Dendritic cell treated with granulocyte-macrophage colony-stimulating factor and Interleukin-4, amounts not matched to agents 40 ng/mL and 50 ng/mL, for 4 days (primary cell): ENCODE measurements at regions of chr12 and their contacts with region 1.

Region 1: DNA sequence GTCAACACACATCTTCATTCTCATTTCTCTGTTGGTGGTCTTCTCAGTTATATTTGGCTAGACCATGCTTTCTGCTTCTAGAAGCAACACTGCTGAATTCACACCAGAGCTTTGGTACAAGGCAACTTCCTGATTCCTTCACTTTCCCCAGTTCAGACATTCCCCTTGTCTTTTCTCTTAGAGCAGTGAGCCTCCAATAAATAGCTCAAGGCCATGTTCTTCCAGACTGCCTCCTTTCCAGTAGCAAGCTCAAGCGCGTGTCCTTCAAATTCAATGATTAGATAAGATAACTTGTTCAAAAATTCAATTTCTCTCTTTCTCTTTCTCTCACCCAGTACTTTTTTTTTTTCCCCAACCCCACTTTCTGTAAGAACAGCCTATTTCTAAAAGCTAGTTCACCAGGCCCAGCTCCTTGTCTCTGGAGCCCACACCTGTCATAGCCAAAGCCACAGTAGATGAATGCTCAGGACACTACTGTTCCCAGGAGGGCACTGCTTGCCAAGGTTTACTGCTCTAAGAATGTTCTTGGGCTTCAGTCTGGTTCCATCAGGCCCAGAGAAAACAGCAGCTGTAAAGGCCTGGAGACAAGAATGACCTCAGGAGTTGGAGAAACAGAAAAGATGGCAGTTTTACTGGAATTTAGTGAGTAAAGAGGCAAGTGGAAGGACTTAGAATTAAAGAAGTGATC is 17.7 kb downstream of the TBK1 start:
- H3K4me3 Mint-ChIP-seq: no peak overlapping the region
- H3K27ac Mint-ChIP-seq: no peak overlapping the region
- H3K4me1 Mint-ChIP-seq: no peaks in the 10 kb centered on the region
- H3K27me3 Mint-ChIP-seq: no peaks in the 10 kb centered on the region

Region 2: GRCh38 chr12:64293654-64294364 is 175.8 kb before region 1 on chr12:
- intact Hi-C with region 1: no loop called
- H3K4me3 Mint-ChIP-seq: no peak overlapping the region
- H3K27ac Mint-ChIP-seq: peak overlapping the region; percentile 46
- H3K4me1 Mint-ChIP-seq: peaks cover 7% of the 10 kb centered on the region
- H3K27me3 Mint-ChIP-seq: no peaks in the 10 kb centered on the region

Region 3: DNA sequence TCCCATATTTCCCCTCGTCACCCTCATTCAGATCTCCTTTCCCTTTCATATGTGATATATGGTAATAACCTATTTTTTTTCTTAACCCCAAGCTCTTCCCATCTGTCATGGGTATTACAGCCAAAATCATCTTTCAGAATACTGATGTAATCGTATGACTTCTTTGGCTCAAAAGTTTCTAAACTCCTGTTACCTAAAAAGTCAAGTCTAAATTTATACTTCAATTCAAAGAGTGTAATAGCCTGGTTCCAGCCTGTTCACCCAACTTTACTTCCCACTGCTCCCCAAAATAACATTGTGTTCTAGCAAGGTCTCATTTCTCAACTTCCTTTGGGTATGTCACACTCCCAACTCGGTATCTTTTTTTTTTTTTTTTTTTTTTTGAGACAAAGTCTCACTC is 30.8 kb after region 1 on chr12:
- intact Hi-C with region 1: loop called (anchors 5 kb)
- H3K4me3 Mint-ChIP-seq: no peak overlapping the region
- H3K27ac Mint-ChIP-seq: no peak overlapping the region
- H3K4me1 Mint-ChIP-seq: peaks cover 5% of the 10 kb centered on the region
- H3K27me3 Mint-ChIP-seq: no peaks in the 10 kb centered on the region

Region 4: GRCh38 chr12:64538121-64538520 is 68.5 kb after region 1 on chr12:
- intact Hi-C with region 1: no loop called
- H3K4me3 Mint-ChIP-seq: no peak overlapping the region
- H3K27ac Mint-ChIP-seq: no peak overlapping the region
- H3K4me1 Mint-ChIP-seq: no peaks in the 10 kb centered on the region
- H3K27me3 Mint-ChIP-seq: peaks cover 5% of the 10 kb centered on the region

Region 5: GRCh38 chr12:64729909-64730587 is 260.4 kb after region 1 on chr12:
- intact Hi-C with region 1: loop called (anchors 10 kb)
- H3K4me3 Mint-ChIP-seq: peak overlapping the region; percentile 9
- H3K27ac Mint-ChIP-seq: peak overlapping the region; percentile 82
- H3K4me1 Mint-ChIP-seq: peaks cover 30% of the 10 kb centered on the region
- H3K27me3 Mint-ChIP-seq: no peaks in the 10 kb centered on the region